Transverse colon (tissue), 4 donors: ENCODE measurements at regions of chr1 and their contacts with region 1.

Region 1: GRCh38 chr1:77370583-77371306 is 88.9 kb downstream of the AK5 start:
- DNase-seq: no peak
- H3K4me3 ChIP-seq: no peak overlapping the region
- H3K27ac ChIP-seq: no peak overlapping the region
- H3K4me1 ChIP-seq: no peaks in the 10 kb centered on the region
- H3K27me3 ChIP-seq: no peaks in the 10 kb centered on the region
- CTCF ChIP-seq: no peak
- EP300 ChIP-seq: no peak
- POLR2A ChIP-seq: no peak

Region 2: GRCh38 chr1:76625886-76626678 is 744.7 kb before region 1 on chr1:
- in situ Hi-C with region 1: no loop called
- intact Hi-C with region 1: loop called (anchors 10 kb)
- DNase-seq: no peak
- H3K4me3 ChIP-seq: no peak overlapping the region
- H3K27ac ChIP-seq: no peak overlapping the region
- H3K4me1 ChIP-seq: no peaks in the 10 kb centered on the region
- H3K27me3 ChIP-seq: no peaks in the 10 kb centered on the region
- CTCF ChIP-seq: no peak
- EP300 ChIP-seq: no peak
- POLR2A ChIP-seq: no peak

Region 3: GRCh38 chr1:77406661-77407060 is 35.9 kb after region 1 on chr1:
- in situ Hi-C with region 1: no loop called
- intact Hi-C with region 1: no loop called
- DNase-seq: no peak
- H3K4me3 ChIP-seq: no peak overlapping the region
- H3K27ac ChIP-seq: no peak overlapping the region
- H3K4me1 ChIP-seq: peaks cover 0 to under 1% (median 0%) of the 10 kb centered on the region in 4 donors
- H3K27me3 ChIP-seq: no peaks in the 10 kb centered on the region
- CTCF ChIP-seq: no peak
- EP300 ChIP-seq: no peak
- POLR2A ChIP-seq: no peak

Region 4: GRCh38 chr1:77438236-77438913 is 67.6 kb after region 1 on chr1:
- in situ Hi-C with region 1: no loop called
- intact Hi-C with region 1: no loop called
- DNase-seq: no peak
- H3K4me3 ChIP-seq: no peak overlapping the region
- H3K27ac ChIP-seq: peak overlapping the region in 2 of 4 donors; percentile 18 to 24
- H3K4me1 ChIP-seq: peaks cover 0 to 4% (median 0%) of the 10 kb centered on the region in 4 donors
- H3K27me3 ChIP-seq: no peaks in the 10 kb centered on the region
- CTCF ChIP-seq: no peak
- EP300 ChIP-seq: no peak
- POLR2A ChIP-seq: no peak